ENCODE measurements at regions of chr14 and their contacts with region 1.

Region 1: GRCh38 chr14:103715052-103716000 is at the starts of genes XRCC3 and ZFYVE21:
- DNase-seq: peak; percentile 99 to 100 (median 99)
- ATAC-seq: peak; percentile 96
- H3K4me3 ChIP-seq: peak within 1 kb of the TSS; percentile 47 to 74
- H3K4me3 Mint-ChIP-seq: peak within 1 kb of the TSS; percentile 97
- H3K27ac ChIP-seq: peak within 1 kb of the TSS in 1 of 2 experiments; percentile 33
- H3K27ac Mint-ChIP-seq: peak within 1 kb of the TSS; percentile 89
- H3K4me1 ChIP-seq: peaks cover 18% of the 10 kb centered on the region
- H3K4me1 Mint-ChIP-seq: peaks cover 43% of the 10 kb centered on the region
- H3K27me3 ChIP-seq: no peaks in the 10 kb centered on the region
- H3K27me3 Mint-ChIP-seq: no peaks in the 10 kb centered on the region
- CTCF ChIP-seq: no peak
- total RNA-seq, gene XRCC3: 5.5 to 6.6 TPM
- total RNA-seq, gene ZFYVE21: 2.5 to 3.7 TPM

Region 2: GRCh38 chr14:103014466-103015319 is 700.6 kb before region 1 on chr14:
- CTCF ChIA-PET with region 1: no interaction called
- POLR2A ChIA-PET with region 1: no interaction called
- intact Hi-C with region 1: no loop called
- DNase-seq: no peak
- ATAC-seq: no peak
- H3K4me3 ChIP-seq: no peak overlapping the region
- H3K4me3 Mint-ChIP-seq: no peak overlapping the region
- H3K27ac ChIP-seq: no peak overlapping the region
- H3K27ac Mint-ChIP-seq: no peak overlapping the region
- H3K4me1 ChIP-seq: no peaks in the 10 kb centered on the region
- H3K4me1 Mint-ChIP-seq: no peaks in the 10 kb centered on the region
- H3K27me3 ChIP-seq: no peaks in the 10 kb centered on the region
- H3K27me3 Mint-ChIP-seq: peaks cover 17% of the 10 kb centered on the region
- CTCF ChIP-seq: no peak

Region 3: GRCh38 chr14:103385152-103385993 is 330.0 kb before region 1 on chr14 and contains the start of gene MARK3:
- CTCF ChIA-PET with region 1: no interaction called
- POLR2A ChIA-PET with region 1: no interaction called
- intact Hi-C with region 1: loop called in 1 of 2 experiments (anchors 5 kb)
- DNase-seq: peak; percentile 91 to 98 (median 96)
- ATAC-seq: peak; percentile 88
- H3K4me3 ChIP-seq: peak within 1 kb of the TSS; percentile 72 to 73
- H3K4me3 Mint-ChIP-seq: peak within 1 kb of the TSS; percentile 97
- H3K27ac ChIP-seq: peak within 1 kb of the TSS; percentile 76 to 92
- H3K27ac Mint-ChIP-seq: peak within 1 kb of the TSS; percentile 96
- H3K4me1 ChIP-seq: peaks cover 26% of the 10 kb centered on the region
- H3K4me1 Mint-ChIP-seq: peaks cover 33% of the 10 kb centered on the region
- H3K27me3 ChIP-seq: no peaks in the 10 kb centered on the region
- H3K27me3 Mint-ChIP-seq: no peaks in the 10 kb centered on the region
- CTCF ChIP-seq: peak; percentile 16
- total RNA-seq, gene MARK3: 123 to 124 TPM

Region 4: DNA sequence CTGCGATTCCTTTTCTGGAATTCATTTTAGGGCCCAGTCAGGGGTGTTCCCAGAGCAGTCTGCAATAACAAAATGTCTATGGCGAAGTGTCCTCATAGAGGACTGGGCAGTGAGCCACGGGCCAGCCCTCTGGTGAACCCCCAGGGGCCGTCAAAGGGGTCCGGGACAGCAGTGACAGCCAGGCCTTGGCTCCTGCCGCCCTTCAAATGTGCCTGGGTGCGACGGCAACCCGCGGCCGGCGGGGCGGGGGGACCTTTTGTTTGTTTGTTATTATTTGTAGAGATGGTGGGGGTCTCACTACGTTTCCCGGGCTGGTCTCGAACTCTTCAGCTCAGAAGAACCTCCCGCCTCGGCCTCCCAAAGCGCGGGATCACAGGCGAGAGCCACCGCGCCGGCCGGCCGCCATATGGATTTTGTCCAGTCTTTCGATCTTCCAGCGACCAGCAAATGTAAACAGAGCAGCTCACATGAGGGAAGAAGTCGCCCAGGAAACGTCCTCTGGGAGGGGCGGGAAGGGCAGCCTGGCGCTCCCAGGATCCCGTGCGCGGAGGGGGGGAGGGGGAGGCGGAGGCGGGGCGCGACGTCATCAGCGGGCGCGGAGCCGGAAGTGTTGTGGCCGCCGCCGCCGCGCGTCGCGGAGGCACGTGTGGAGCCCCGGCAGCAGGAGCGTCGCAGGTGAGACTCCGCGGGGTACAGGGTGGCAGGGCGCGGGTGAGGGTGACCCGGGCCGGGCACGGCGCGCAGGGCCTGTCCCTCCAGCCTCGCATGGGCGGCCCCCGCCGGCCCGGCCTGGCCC is 186.5 kb before region 1 on chr14 and contains the start of gene TRMT61A:
- CTCF ChIA-PET with region 1: no interaction called
- POLR2A ChIA-PET with region 1: no interaction called
- intact Hi-C with region 1: loop called in 1 of 2 experiments (anchors 2 kb)
- DNase-seq: peak; percentile 57 to 89 (median 77)
- ATAC-seq: peak; percentile 90
- H3K4me3 ChIP-seq: peak within 1 kb of the TSS; percentile 87 to 92
- H3K4me3 Mint-ChIP-seq: peak within 1 kb of the TSS; percentile 91
- H3K27ac ChIP-seq: peak within 1 kb of the TSS; percentile 77 to 88
- H3K27ac Mint-ChIP-seq: peak within 1 kb of the TSS; percentile 93
- H3K4me1 ChIP-seq: peaks cover 31% of the 10 kb centered on the region
- H3K4me1 Mint-ChIP-seq: peaks cover 37% of the 10 kb centered on the region
- H3K27me3 ChIP-seq: no peaks in the 10 kb centered on the region
- H3K27me3 Mint-ChIP-seq: peaks cover under 1% of the 10 kb centered on the region
- CTCF ChIP-seq: no peak
- total RNA-seq, gene TRMT61A: 10.9 to 11.6 TPM

Region 5: GRCh38 chr14:103606963-103607668 is 108.2 kb before region 1 on chr14:
- CTCF ChIA-PET with region 1: no interaction called
- POLR2A ChIA-PET with region 1: no interaction called
- intact Hi-C with region 1: loop called in 1 of 2 experiments (anchors 5 kb)
- DNase-seq: peak; percentile 12 to 83 (median 63)
- ATAC-seq: peak; percentile 82
- H3K4me3 ChIP-seq: peak overlapping the region; percentile 16 to 33
- H3K4me3 Mint-ChIP-seq: peak overlapping the region; percentile 74
- H3K27ac ChIP-seq: no peak overlapping the region
- H3K27ac Mint-ChIP-seq: no peak overlapping the region
- H3K4me1 ChIP-seq: peaks cover 19% of the 10 kb centered on the region
- H3K4me1 Mint-ChIP-seq: peaks cover 18% of the 10 kb centered on the region
- H3K27me3 ChIP-seq: no peaks in the 10 kb centered on the region
- H3K27me3 Mint-ChIP-seq: peaks cover 10% of the 10 kb centered on the region
- CTCF ChIP-seq: no peak

Region 6: GRCh38 chr14:103657471-103657870 is 57.9 kb before region 1 on chr14:
- CTCF ChIA-PET with region 1: no interaction called
- POLR2A ChIA-PET with region 1: no interaction called
- intact Hi-C with region 1: no loop called
- DNase-seq: no peak
- ATAC-seq: no peak
- H3K4me3 ChIP-seq: no peak overlapping the region
- H3K4me3 Mint-ChIP-seq: no peak overlapping the region
- H3K27ac ChIP-seq: no peak overlapping the region
- H3K27ac Mint-ChIP-seq: no peak overlapping the region
- H3K4me1 ChIP-seq: no peaks in the 10 kb centered on the region
- H3K4me1 Mint-ChIP-seq: peaks cover 9% of the 10 kb centered on the region
- H3K27me3 ChIP-seq: no peaks in the 10 kb centered on the region
- H3K27me3 Mint-ChIP-seq: no peaks in the 10 kb centered on the region
- CTCF ChIP-seq: no peak

Region 7: GRCh38 chr14:103748534-103748857 is 33.2 kb after region 1 on chr14:
- CTCF ChIA-PET with region 1: no interaction called
- POLR2A ChIA-PET with region 1: interaction called, 6 read pairs
- intact Hi-C with region 1: loop called in 1 of 2 experiments (anchors 1 kb)
- DNase-seq: peak; percentile 24 to 78 (median 57)
- ATAC-seq: peak; percentile 98
- H3K4me3 ChIP-seq: no peak overlapping the region
- H3K4me3 Mint-ChIP-seq: peak overlapping the region; percentile 23
- H3K27ac ChIP-seq: peak overlapping the region in 1 of 2 experiments; percentile 47
- H3K27ac Mint-ChIP-seq: peak overlapping the region; percentile 81
- H3K4me1 ChIP-seq: peaks cover 17% of the 10 kb centered on the region
- H3K4me1 Mint-ChIP-seq: peaks cover 21% of the 10 kb centered on the region
- H3K27me3 ChIP-seq: no peaks in the 10 kb centered on the region
- H3K27me3 Mint-ChIP-seq: no peaks in the 10 kb centered on the region
- CTCF ChIP-seq: no peak

Region 8: GRCh38 chr14:103920981-103921854 is 205.9 kb after region 1 on chr14:
- CTCF ChIA-PET with region 1: no interaction called
- POLR2A ChIA-PET with region 1: no interaction called
- intact Hi-C with region 1: loop called (anchors 1 kb)
- DNase-seq: peak; percentile 90 to 97 (median 94)
- ATAC-seq: peak; percentile 99
- H3K4me3 ChIP-seq: peak overlapping the region; percentile 88 to 91
- H3K4me3 Mint-ChIP-seq: peak overlapping the region; percentile 90
- H3K27ac ChIP-seq: peak overlapping the region; percentile 67 to 71
- H3K27ac Mint-ChIP-seq: peak overlapping the region; percentile 89
- H3K4me1 ChIP-seq: peaks cover 20% of the 10 kb centered on the region
- H3K4me1 Mint-ChIP-seq: peaks cover 24% of the 10 kb centered on the region
- H3K27me3 ChIP-seq: peaks cover 0 to 8% of the 10 kb centered on the region in 2 experiments
- H3K27me3 Mint-ChIP-seq: peaks cover 7% of the 10 kb centered on the region
- CTCF ChIP-seq: peak; percentile 90

Measured in CD8-positive, alpha-beta T cell (primary cell).